Breast epithelium (tissue), 4 donors: ENCODE measurements at regions of chr4 and their contacts with region 1.

Region 1: GRCh38 chr4:148608968-148609367 is 166.8 kb upstream of the NR3C2 start:
- DNase-seq: no peak
- H3K4me3 ChIP-seq: no peak overlapping the region
- H3K27ac ChIP-seq: no peak overlapping the region
- H3K4me1 ChIP-seq: no peaks in the 10 kb centered on the region
- H3K27me3 ChIP-seq: no peaks in the 10 kb centered on the region
- CTCF ChIP-seq: no peak
- POLR2A ChIP-seq: no peak

Region 2: DNA sequence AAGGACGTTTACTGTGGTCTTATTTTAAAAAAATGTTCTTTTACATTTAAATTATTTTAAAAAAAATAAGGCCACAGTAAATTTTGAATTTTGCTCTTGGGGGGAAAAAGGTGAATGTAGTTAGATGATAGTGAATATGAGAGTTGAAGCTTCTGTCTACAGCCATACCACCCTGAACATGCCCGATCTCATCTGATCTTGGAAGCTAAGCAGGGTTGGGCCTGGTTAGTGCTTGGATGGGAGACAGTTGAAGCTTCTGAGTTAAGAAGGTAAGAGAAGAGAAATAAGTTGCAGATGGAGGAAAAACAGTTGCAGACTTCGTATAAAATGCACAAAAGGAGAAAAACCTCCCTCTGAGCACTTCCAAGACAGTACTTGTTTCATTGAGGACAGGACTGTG is 51.2 kb before region 1 on chr4:
- intact Hi-C with region 1: loop called (anchors 2 kb)
- DNase-seq: no peak
- H3K4me3 ChIP-seq: no peak overlapping the region
- H3K27ac ChIP-seq: no peak overlapping the region
- H3K4me1 ChIP-seq: no peaks in the 10 kb centered on the region
- H3K27me3 ChIP-seq: no peaks in the 10 kb centered on the region
- CTCF ChIP-seq: no peak
- POLR2A ChIP-seq: no peak

Region 3: GRCh38 chr4:148822572-148823418 is 213.8 kb after region 1 on chr4:
- intact Hi-C with region 1: loop called (anchors 5 kb)
- DNase-seq: no peak
- H3K4me3 ChIP-seq: no peak overlapping the region
- H3K27ac ChIP-seq: no peak overlapping the region
- H3K4me1 ChIP-seq: no peaks in the 10 kb centered on the region
- H3K27me3 ChIP-seq: no peaks in the 10 kb centered on the region
- CTCF ChIP-seq: no peak
- POLR2A ChIP-seq: no peak